ENCODE measurements at regions of chr9 and their contacts with region 1.

Region 1: GRCh38 chr9:75866273-75866871 is 24.1 kb upstream of the PCSK5 start:
- ATAC-seq: peak in 3 of 8 experiments; percentile 34 to 44 (median 37)
- H3K4me3 ChIP-seq: no peak overlapping the region
- H3K27ac ChIP-seq: no peak overlapping the region
- H3K4me1 ChIP-seq: no peaks in the 10 kb centered on the region

Region 2: GRCh38 chr9:75265525-75265972 is 600.8 kb before region 1 on chr9:
- in situ Hi-C with region 1: loop called in 1 of 9 experiments (anchors 25 kb)
- ATAC-seq: peak in 7 of 8 experiments; percentile 49 to 80 (median 65)
- H3K4me3 ChIP-seq: no peak overlapping the region
- H3K27ac ChIP-seq: no peak overlapping the region
- H3K4me1 ChIP-seq: no peaks in the 10 kb centered on the region

Region 3: DNA sequence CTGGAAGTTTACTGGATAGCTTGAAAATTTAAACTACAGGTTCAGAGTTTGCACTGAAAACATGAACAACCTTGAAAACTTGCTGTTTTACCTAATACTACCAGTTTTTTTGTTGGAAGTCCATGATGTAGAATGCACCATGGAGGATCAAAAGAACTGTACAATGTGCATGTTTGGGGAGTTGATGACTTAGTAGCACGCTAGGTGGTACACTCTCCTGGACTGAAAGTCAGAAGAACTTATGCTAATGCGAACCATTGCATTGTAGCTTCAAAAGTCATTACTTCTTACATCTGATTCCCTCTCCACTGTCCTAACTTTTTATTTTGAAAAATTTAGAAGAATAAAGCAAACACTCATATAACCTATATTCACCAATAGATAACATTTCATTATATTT is 567.0 kb before region 1 on chr9:
- in situ Hi-C with region 1: loop called in 1 of 9 experiments (anchors 25 kb)
- ATAC-seq: peak in 2 of 8 experiments; percentile 44 to 48
- H3K4me3 ChIP-seq: no peak overlapping the region
- H3K27ac ChIP-seq: no peak overlapping the region
- H3K4me1 ChIP-seq: no peaks in the 10 kb centered on the region

Region 4: DNA sequence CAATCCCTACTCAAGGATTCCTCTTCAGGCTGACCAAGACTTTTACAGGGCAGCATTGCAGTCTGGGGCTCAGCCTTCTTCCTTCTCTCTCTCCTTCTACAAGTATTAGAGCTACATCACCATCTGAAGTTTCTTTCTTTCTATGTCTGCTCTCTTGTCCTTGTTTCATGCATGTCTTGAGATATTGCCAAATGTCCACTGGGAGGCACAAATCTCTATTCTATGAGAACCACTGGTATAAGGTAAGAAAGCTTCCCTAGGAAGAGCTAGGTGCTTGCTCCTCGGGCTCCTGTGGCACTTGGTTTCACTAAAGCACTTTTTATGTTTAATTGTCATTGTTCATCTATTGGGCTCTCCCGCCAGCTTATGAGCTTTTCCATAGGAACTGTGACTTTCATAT is 265.1 kb before region 1 on chr9:
- in situ Hi-C with region 1: loop called in 2 of 9 experiments (anchors 25 kb)
- ATAC-seq: peak in 1 of 8 experiments; percentile 80
- H3K4me3 ChIP-seq: no peak overlapping the region
- H3K27ac ChIP-seq: no peak overlapping the region
- H3K4me1 ChIP-seq: no peaks in the 10 kb centered on the region

Region 5: GRCh38 chr9:75739884-75740611 is 126.3 kb before region 1 on chr9:
- in situ Hi-C with region 1: loop called in 1 of 9 experiments (anchors 25 kb)
- ATAC-seq: peak in 2 of 8 experiments; percentile 31 to 33
- H3K4me3 ChIP-seq: no peak overlapping the region
- H3K27ac ChIP-seq: no peak overlapping the region
- H3K4me1 ChIP-seq: no peaks in the 10 kb centered on the region

Region 6: DNA sequence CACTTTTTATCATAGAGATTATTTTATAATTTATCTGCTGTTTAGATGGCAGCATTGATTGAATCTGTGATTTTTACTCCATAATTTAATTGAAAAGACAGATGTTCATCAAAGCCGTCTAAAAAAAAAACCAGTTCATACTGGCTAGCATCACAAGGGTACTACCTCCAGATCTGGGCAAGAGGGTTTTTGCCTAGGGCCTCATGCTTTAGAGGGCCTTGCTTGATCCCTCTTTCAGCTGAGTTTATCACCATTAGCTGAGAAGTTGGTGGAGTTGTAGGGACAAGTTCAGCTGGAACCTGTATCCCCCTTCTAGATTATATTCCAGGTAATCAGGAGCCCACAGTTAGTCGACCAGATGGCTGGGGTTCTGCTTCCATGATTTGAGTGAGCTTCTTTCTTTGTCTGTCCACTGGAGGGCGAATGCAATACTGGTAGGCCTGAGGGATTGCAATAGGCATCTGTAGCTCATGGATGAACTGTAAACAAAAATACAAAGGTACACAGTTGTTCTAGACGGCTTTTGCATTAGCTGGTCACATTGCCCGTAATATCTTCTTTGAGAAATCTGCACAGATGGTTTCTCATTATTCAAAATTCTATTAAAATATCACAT is 112.9 kb after region 1 on chr9:
- in situ Hi-C with region 1: no loop called
- ATAC-seq: peak in 3 of 8 experiments; percentile 37 to 60 (median 41)
- H3K4me3 ChIP-seq: no peak overlapping the region
- H3K27ac ChIP-seq: no peak overlapping the region
- H3K4me1 ChIP-seq: peaks cover 2 to 6% of the 10 kb centered on the region in 2 donors

Region 7: DNA sequence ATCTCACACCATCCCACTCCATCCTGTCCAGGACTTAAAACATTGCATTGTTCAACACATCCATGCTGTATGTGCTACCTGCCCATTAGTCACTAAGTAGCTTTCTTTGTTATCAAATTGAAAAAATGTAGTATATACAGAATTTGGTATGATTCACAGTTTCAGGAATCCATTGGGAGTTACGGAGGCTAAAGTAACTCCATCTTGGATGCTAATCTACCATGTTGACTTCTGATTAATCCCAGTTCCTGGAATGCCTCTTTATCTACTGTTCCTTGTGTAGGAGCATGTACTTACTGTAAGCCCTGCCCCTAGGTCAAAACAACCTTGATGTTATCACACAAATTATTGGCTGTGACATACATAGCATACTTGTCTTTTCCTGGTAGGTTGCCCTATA is 1114.2 kb after region 1 on chr9:
- in situ Hi-C with region 1: no loop called
- ATAC-seq: no peak
- H3K4me3 ChIP-seq: no peak overlapping the region
- H3K27ac ChIP-seq: no peak overlapping the region
- H3K4me1 ChIP-seq: no peaks in the 10 kb centered on the region